Testis (tissue), 5 donors: ENCODE measurements at regions of chr15 and their contacts with region 1.

Region 1: DNA sequence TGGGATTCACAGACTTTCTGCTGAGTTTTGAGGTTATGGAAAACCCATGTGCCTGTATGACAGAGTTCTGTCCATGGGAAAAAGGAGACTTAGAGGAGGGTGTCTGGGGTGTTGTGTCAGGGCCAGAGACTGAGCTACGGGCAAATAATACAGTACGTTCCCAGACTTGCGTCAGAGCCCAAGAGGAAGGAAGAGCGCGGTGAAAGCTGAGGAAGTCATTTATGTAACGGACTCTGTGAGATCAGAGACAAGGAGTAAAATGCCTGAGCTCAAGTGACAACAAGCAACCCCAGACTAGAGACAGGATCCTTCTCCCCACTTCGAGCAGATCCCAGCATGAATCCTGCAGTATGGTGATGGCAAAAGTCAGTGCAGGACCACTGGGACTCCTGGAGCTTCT is 368.6 kb upstream of the MCTP2 start:
- DNase-seq: peak; percentile 37
- H3K4me3 ChIP-seq: no peak overlapping the region
- H3K27ac ChIP-seq: peak overlapping the region in 1 of 2 donors; percentile 38
- H3K4me1 ChIP-seq: no peaks in the 10 kb centered on the region
- H3K27me3 ChIP-seq: no peaks in the 10 kb centered on the region
- CTCF ChIP-seq: no peak
- POLR2A ChIP-seq: no peak

Region 2: DNA sequence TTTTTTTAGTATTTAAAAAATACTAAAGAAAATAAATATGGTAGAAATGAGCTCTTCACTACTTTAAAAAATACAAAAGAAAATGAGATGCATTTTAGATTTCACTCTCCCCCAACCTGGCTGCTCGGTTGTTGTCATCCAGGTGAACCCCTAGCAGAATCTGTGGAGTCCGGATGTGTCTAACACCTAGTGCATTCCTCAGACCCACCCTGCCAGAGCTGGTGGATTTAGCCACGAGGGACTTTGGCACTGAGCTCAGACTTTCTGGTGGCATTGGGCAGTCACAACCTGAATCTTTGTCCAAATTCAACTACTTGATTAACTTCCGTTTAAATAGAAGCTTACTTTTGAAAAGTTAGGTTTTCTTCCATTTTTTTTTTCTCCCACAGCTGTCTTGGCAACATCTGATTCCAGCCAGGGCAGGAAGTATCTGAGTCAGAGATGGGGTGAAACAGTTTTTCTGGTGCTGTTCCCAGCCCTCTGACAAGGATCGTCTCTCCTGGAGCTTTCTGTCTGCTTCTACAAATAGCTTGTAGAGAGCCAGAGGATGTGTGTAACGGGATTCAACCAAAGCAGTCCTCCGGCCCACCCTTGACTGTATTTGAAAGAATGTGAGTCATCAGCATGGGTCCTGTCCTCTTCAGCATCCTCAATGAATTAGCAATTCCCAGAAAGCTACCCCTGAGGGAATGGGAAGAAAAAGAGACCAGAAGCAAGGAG is 66.7 kb after region 1 on chr15:
- intact Hi-C with region 1: loop called (anchors 10 kb)
- DNase-seq: peak; percentile 47
- H3K4me3 ChIP-seq: no peak overlapping the region
- H3K27ac ChIP-seq: no peak overlapping the region
- H3K4me1 ChIP-seq: no peaks in the 10 kb centered on the region
- H3K27me3 ChIP-seq: no peaks in the 10 kb centered on the region
- CTCF ChIP-seq: no peak
- POLR2A ChIP-seq: no peak

Region 3: DNA sequence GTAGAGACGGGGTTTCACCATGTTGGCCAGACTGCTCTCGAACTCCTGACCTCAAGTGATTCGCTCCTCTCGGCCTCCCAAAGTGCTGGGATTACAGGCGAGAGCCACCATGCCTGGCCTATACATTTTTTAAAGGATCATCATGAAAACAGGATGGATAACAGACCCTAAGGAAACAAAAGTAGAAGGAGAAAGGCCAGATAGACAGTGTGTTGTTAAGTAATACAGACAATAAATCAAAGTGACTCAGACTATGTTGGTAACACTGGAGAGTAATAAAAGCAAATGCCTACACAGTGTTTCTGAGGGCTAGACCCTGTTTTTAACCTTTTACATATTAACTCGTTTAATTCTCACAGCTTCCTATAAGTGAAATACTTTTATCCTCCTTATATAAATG is 234.8 kb after region 1 on chr15:
- intact Hi-C with region 1: no loop called
- DNase-seq: no peak
- H3K4me3 ChIP-seq: no peak overlapping the region
- H3K27ac ChIP-seq: no peak overlapping the region
- H3K4me1 ChIP-seq: no peaks in the 10 kb centered on the region
- H3K27me3 ChIP-seq: no peaks in the 10 kb centered on the region
- CTCF ChIP-seq: no peak
- POLR2A ChIP-seq: no peak